ENCODE measurements at regions of chr19 and their contacts with region 1.

Region 1: GRCh38 chr19:46192992-46193650 is 36.4 kb upstream of the IGFL1 start:
- DNase-seq: peak; percentile 31
- ATAC-seq: peak; percentile 65
- H3K4me3 Mint-ChIP-seq: no peak overlapping the region
- H3K27ac Mint-ChIP-seq: no peak overlapping the region
- H3K4me1 Mint-ChIP-seq: no peaks in the 10 kb centered on the region
- H3K27me3 Mint-ChIP-seq: peaks cover 48% of the 10 kb centered on the region

Region 2: DNA sequence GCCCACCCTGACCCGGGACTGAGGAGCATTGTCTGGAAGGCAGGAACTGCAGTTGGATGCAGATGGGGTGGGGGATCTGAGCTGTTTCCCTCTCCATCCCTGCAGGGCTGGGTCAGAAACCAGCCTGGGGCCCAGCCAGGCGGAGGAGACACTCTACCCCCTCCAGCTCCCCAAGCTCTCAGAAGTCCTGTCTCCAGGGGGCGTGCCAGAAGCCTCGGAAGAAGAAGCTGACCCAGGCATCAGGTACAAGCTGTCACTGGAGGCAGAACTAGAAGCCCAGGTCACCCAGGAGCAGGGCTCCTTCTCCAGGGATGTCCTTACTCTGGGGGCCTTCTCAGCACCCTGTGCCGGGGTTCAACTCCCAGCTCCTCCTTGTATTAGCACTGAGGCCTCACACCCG is 439.6 kb before region 1 on chr19:
- CTCF ChIA-PET with region 1: no interaction called
- POLR2A ChIA-PET with region 1: no interaction called
- intact Hi-C with region 1: no loop called
- DNase-seq: no peak
- ATAC-seq: no peak
- H3K4me3 Mint-ChIP-seq: no peak overlapping the region
- H3K27ac Mint-ChIP-seq: no peak overlapping the region
- H3K4me1 Mint-ChIP-seq: no peaks in the 10 kb centered on the region
- H3K27me3 Mint-ChIP-seq: no peaks in the 10 kb centered on the region

Region 3: DNA sequence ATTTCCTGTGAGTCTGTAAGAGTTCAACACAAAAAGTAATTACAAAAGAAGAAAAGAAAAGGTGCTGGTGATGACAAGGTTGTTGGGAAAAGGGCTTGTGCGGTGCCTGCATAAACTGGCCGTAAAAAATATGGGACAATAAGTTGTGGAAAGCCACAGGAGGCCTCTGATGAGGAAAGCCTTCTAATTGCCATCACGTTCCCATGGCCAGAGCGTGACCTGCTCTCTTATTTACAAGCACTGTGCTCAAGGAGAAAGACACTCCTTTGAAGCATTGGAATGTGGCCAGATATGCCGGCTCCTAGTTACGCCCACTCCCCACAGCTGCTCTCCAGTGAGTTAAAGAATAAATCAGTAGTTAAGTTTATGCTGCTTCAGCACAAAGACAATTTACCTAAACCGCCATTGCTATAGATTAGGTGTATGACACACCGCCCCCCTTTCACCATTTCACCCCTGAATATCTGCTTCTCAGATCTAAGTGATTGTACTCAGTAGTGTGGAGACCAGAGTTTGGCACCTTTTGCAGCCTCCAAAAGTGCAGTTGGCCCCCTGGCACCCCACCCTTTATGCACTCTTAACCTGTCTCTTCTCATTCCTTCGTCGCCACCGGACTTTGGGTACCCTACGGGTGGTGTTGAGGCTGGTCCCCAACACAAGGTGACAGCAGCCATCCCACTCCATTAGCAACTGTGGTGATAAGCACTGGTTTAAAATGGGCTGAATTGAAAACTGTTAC is 162.1 kb before region 1 on chr19:
- CTCF ChIA-PET with region 1: interaction called, 12 read pairs
- POLR2A ChIA-PET with region 1: no interaction called
- intact Hi-C with region 1: loop called (anchors 1 to 2 kb)
- DNase-seq: no peak
- ATAC-seq: no peak
- H3K4me3 Mint-ChIP-seq: no peak overlapping the region
- H3K27ac Mint-ChIP-seq: no peak overlapping the region
- H3K4me1 Mint-ChIP-seq: peaks cover 12% of the 10 kb centered on the region
- H3K27me3 Mint-ChIP-seq: peaks cover 8% of the 10 kb centered on the region

Measured in activated CD4-positive, alpha-beta T cell treated with anti-CD3 and anti-CD28 coated beads for 36 hours (primary cell).